PC-3 (cell line): ENCODE measurements at regions of chr18 and their contacts with region 1.

Region 1: GRCh38 chr18:74652392-74652988 is 54.8 kb downstream of the ZNF407 start:
- DNase-seq: peak; percentile 69
- ATAC-seq: peak; percentile 59
- H3K4me3 ChIP-seq: no peak overlapping the region
- H3K27ac ChIP-seq: no peak overlapping the region
- H3K4me1 ChIP-seq: no peaks in the 10 kb centered on the region
- H3K27me3 ChIP-seq: no peaks in the 10 kb centered on the region
- CTCF ChIP-seq: peak; percentile 71

Region 2: DNA sequence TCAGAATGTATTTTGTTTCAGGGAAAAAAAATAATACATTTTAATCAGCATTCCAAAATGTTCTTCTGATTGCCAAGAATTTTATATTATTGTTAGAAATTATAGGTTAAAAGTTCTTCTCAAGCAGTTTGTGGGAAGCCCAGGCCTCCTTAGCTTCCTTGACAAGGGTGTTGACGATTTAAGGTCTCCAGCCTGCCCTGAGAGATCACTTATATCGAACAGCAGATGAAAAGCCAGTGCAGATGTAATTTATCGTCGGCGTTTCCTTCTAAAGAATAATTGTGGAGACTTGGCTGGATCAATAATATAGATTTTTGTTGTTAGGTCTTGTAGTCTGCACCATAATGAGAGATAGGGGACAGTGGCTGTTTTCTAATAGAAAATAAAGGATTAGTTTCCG is 225.8 kb after region 1 on chr18:
- CTCF ChIA-PET with region 1: no interaction called
- POLR2A ChIA-PET with region 1: no interaction called
- intact Hi-C with region 1: loop called (anchors 2 kb)
- DNase-seq: no peak
- ATAC-seq: no peak
- H3K4me3 ChIP-seq: no peak overlapping the region
- H3K27ac ChIP-seq: no peak overlapping the region
- H3K4me1 ChIP-seq: no peaks in the 10 kb centered on the region
- H3K27me3 ChIP-seq: no peaks in the 10 kb centered on the region
- CTCF ChIP-seq: no peak

Region 3: DNA sequence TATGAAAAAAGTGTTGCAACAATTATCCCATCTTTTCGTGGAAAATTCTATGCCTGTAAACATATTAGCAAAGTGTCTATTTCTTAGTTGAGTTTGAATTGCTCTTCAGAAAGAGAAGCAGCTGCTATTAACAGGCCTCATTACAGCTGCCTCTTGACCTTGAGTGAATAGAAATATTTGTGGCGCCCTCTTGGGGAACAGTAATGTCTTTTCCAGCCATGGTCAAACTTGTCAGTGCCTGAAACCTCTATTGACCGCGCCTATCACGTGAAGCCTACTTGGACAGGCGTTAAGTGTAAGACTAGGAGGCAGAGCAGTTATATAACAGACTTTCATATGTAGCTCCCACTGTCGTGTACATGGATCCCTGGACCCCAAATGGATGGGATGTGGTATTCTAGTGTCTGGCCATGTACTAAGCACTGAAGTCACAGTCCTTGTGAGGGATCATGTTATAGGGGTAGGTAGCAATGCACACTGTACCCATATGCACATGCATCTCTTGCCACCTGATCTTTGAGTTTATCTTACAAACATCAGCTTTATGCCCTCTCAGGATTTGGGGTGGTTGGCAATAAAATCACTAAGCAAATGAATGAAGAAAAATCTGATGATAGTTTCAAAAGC is 311.4 kb after region 1 on chr18:
- CTCF ChIA-PET with region 1: no interaction called
- POLR2A ChIA-PET with region 1: no interaction called
- intact Hi-C with region 1: loop called (anchors 1 kb)
- DNase-seq: peak; percentile 63
- ATAC-seq: peak; percentile 97
- H3K4me3 ChIP-seq: no peak overlapping the region
- H3K27ac ChIP-seq: no peak overlapping the region
- H3K4me1 ChIP-seq: no peaks in the 10 kb centered on the region
- H3K27me3 ChIP-seq: no peaks in the 10 kb centered on the region
- CTCF ChIP-seq: peak; percentile 77

Region 4: GRCh38 chr18:75209129-75209950 is 556.9 kb after region 1 on chr18 and contains the start of gene PTGR3:
- CTCF ChIA-PET with region 1: no interaction called
- POLR2A ChIA-PET with region 1: no interaction called
- intact Hi-C with region 1: loop called (anchors 5 kb)
- DNase-seq: peak; percentile 84
- ATAC-seq: peak; percentile 56
- H3K4me3 ChIP-seq: peak within 1 kb of the TSS; percentile 92
- H3K27ac ChIP-seq: peak within 1 kb of the TSS; percentile 89
- H3K4me1 ChIP-seq: peaks cover 38% of the 10 kb centered on the region
- H3K27me3 ChIP-seq: no peaks in the 10 kb centered on the region
- CTCF ChIP-seq: no peak
- total RNA-seq, gene PTGR3: 8.2 and 8.3 TPM in 2 replicates

Region 5: GRCh38 chr18:76349067-76349715 is 1696.7 kb after region 1 on chr18:
- CTCF ChIA-PET with region 1: no interaction called
- POLR2A ChIA-PET with region 1: no interaction called
- intact Hi-C with region 1: loop called (anchors 5 kb)
- DNase-seq: peak; percentile 82
- ATAC-seq: peak; percentile 48
- H3K4me3 ChIP-seq: peak overlapping the region; percentile 58
- H3K27ac ChIP-seq: no peak overlapping the region
- H3K4me1 ChIP-seq: peaks cover 4% of the 10 kb centered on the region; the same call in 1 of the 2 replicates
- H3K27me3 ChIP-seq: 0 out of 2 replicates have a peak, but pooled peaks cover 13% of the 10 kb centered on the region
- CTCF ChIP-seq: peak; percentile 85